HCT116 (cell line): ENCODE measurements at regions of chr2 and their contacts with region 1.

Region 1: GRCh38 chr2:15939854-15940660 is at the start of gene MYCN:
- DNase-seq: no peak
- ATAC-seq: peak; percentile 60
- H3K4me3 ChIP-seq: peak within 1 kb of the TSS; percentile 21 to 42
- H3K27ac ChIP-seq: no peak within 1 kb of the TSS
- H3K4me1 ChIP-seq: peaks cover 0 to 9% of the 10 kb centered on the region in 2 experiments; a peak in 3 of 4 replicates
- H3K27me3 ChIP-seq: peaks cover 13% of the 10 kb centered on the region; the same call in 1 of the 2 replicates
- CTCF ChIP-seq: peak in 1 of 3 experiments; percentile 84; a peak in 4 of 6 replicates
- POLR2A ChIP-seq: no peak
- RAD21 ChIP-seq: peak; percentile 89
- total RNA-seq, gene MYCN: not detected

Region 2: GRCh38 chr2:16038621-16039020 is 98.6 kb after region 1 on chr2:
- CTCF ChIA-PET with region 1: no interaction called
- POLR2A ChIA-PET with region 1: no interaction called
- RAD21 ChIA-PET with region 1: no interaction called
- intact Hi-C with region 1: no loop called
- DNase-seq: no peak
- ATAC-seq: no peak
- H3K4me3 ChIP-seq: no peak overlapping the region
- H3K27ac ChIP-seq: no peak overlapping the region
- H3K4me1 ChIP-seq: no peaks in the 10 kb centered on the region
- H3K27me3 ChIP-seq: peaks cover 41% of the 10 kb centered on the region
- CTCF ChIP-seq: no peak
- POLR2A ChIP-seq: no peak
- RAD21 ChIP-seq: no peak

Region 3: DNA sequence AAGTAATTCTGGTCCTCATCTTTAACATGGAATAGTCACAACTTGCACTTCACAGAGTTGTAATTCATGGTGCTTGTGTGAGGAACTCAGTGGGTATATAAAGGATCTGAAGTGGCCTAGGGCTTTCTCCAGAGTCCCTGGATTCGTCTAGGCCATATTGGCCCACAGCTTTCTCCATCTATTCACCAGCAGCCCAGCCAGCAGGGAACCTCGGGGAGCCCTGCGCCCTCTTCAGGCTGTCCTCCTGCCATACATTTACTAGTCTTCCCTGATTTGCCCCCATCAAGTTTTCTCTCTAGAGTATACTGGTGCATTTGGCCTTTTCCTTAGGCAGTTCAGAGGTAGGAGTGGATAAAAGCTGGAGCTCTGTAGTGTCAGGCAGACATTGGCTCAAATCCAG is 278.6 kb after region 1 on chr2:
- CTCF ChIA-PET with region 1: interaction called, 5 read pairs
- POLR2A ChIA-PET with region 1: no interaction called
- RAD21 ChIA-PET with region 1: no interaction called
- intact Hi-C with region 1: loop called (anchors 1 kb)
- DNase-seq: peak; percentile 3
- ATAC-seq: peak; percentile 87
- H3K4me3 ChIP-seq: no peak overlapping the region
- H3K27ac ChIP-seq: no peak overlapping the region
- H3K4me1 ChIP-seq: no peaks in the 10 kb centered on the region
- H3K27me3 ChIP-seq: peaks cover 4% of the 10 kb centered on the region
- CTCF ChIP-seq: peak; percentile 27 to 57 (median 47); a peak in 4 of 6 replicates
- POLR2A ChIP-seq: no peak
- RAD21 ChIP-seq: peak; percentile 44

Region 4: DNA sequence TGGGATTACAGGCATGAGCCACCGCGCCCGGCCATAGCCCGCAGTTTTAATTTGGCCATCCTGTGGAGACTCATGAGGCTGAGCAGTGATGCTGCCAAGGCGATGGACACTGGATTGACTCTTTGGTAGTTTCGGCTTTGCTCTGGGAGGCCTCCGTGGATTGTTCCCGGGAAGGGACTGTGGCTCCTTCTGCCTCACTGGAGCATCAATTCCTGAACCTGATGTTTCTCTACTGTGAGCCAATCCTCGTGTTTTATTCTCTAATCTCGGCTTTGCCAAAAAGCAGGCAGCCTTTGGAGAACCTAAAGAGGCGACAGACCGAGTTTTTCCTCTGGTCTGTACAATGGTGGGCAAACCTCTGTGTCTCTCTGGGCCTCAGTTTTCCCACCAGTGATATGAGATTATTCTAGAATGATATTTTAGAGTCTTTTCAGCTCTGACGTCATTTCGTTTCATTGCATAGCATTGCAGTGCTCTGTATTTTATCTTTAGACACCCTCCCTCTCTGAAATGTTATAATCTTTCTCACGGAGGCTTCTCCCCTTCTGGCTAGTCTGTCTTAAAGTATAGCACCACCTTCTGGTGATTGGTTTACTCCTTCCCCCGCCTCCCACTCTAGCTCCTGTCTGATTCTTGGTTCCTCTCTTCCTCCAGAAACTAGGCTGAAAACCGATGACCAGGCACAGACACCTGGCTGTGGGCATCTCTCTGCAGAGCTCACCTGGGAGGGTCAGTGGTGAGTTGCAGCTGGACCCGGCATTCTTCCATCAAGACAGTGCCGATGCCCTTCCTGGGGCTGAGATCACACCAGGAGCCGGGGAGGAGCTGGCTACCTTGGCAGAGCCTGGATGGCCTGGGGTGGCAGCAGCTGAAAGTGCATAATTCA is 341.6 kb after region 1 on chr2:
- CTCF ChIA-PET with region 1: interaction called, 24 read pairs
- POLR2A ChIA-PET with region 1: no interaction called
- RAD21 ChIA-PET with region 1: interaction called, 7 to 8 read pairs
- intact Hi-C with region 1: loop called (anchors 1 kb)
- DNase-seq: peak; percentile 10
- ATAC-seq: peak; percentile 88
- H3K4me3 ChIP-seq: no peak overlapping the region
- H3K27ac ChIP-seq: no peak overlapping the region
- H3K4me1 ChIP-seq: no peaks in the 10 kb centered on the region
- H3K27me3 ChIP-seq: peaks cover 9% of the 10 kb centered on the region; the same call in 1 of the 2 replicates
- CTCF ChIP-seq: peak; percentile 27 to 51 (median 46); a peak in 5 of 6 replicates
- POLR2A ChIP-seq: no peak
- RAD21 ChIP-seq: peak; percentile 55

Region 5: DNA sequence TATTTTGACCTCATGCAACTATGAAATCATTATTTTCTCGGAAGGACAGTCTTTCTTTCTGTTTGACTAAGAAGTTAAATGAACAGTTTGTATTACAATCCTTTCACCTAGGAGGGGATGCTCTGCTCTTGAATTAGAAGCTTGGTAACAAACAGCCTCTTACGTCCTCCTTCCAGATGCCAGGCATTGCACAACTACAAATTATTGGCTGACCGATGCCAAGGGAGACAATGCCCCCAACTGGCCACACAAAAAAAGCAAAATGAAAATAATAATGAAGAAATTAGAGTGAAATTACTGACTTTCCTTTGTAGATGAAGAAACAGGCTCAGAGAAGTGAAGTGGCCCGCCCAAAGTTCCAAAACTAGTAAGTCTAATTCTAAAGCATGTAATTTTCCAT is 547.6 kb after region 1 on chr2:
- CTCF ChIA-PET with region 1: no interaction called
- POLR2A ChIA-PET with region 1: no interaction called
- RAD21 ChIA-PET with region 1: interaction called in 1 of 2 experiments, 3 read pairs
- intact Hi-C with region 1: loop called (anchors 1 kb)
- DNase-seq: no peak
- ATAC-seq: 0 out of 2 replicates have a peak, but pooled peaks have one; percentile 52
- H3K4me3 ChIP-seq: no peak overlapping the region
- H3K27ac ChIP-seq: no peak overlapping the region
- H3K4me1 ChIP-seq: no peaks in the 10 kb centered on the region
- H3K27me3 ChIP-seq: no peaks in the 10 kb centered on the region; the same call in 1 of the 2 replicates
- CTCF ChIP-seq: peak; percentile 37 to 57 (median 40); a peak in 4 of 6 replicates
- POLR2A ChIP-seq: no peak
- RAD21 ChIP-seq: peak; percentile 67

Region 6: GRCh38 chr2:16763493-16763899 is 823.4 kb after region 1 on chr2:
- CTCF ChIA-PET with region 1: no interaction called
- POLR2A ChIA-PET with region 1: no interaction called
- RAD21 ChIA-PET with region 1: no interaction called
- intact Hi-C with region 1: loop called (anchors 10 kb)
- DNase-seq: no peak
- ATAC-seq: no peak
- H3K4me3 ChIP-seq: no peak overlapping the region
- H3K27ac ChIP-seq: no peak overlapping the region
- H3K4me1 ChIP-seq: no peaks in the 10 kb centered on the region
- H3K27me3 ChIP-seq: peaks cover 22% of the 10 kb centered on the region
- CTCF ChIP-seq: no peak
- POLR2A ChIP-seq: no peak
- RAD21 ChIP-seq: no peak